ENCODE measurements at regions of chr17 and their contacts with region 1.

Region 1: DNA sequence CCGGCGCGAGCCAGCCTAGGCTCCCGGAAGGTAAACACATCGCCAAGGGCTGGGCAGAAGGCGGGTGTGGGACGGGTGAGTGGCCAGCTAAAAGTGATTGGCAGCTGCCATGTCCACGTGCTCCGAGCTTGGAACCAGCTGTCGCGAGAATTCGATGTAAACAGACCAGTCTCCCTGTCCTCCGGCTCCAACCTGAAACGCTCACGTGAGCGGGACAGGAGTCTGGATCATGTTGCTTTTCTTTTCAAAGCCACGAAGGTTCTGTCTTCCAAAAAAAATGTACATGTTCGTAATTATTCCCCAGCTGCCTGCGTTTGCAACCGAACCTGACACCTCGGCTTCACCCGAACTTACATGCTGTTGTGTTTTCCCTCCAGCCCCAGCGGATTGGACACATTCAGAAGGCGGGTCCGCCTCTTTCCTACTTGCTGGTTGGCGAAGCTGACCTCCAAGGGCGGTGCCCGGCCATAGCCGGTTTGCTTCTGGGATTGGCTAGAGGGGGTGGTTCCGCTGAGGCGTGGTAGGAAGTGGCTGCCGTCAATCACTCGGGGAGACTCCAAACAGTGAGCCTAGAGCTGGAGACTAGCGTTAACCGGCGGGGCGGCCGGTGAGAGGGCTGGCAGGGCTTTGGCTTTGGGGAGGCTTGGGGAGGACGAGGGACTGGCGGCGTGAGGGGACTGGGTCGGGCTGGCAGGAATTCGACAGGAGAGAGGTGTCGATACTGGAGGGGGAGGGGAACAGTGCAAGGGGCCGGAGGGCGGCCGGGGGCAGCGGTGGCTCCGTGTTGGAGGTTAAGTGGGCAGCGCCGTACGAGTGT is at the start of gene BCAS3:
- DNase-seq: peak; percentile 82 to 98 (median 97)
- ATAC-seq: peak; percentile 97
- H3K4me3 ChIP-seq: peak within 1 kb of the TSS; percentile 85
- H3K4me3 Mint-ChIP-seq: peak within 1 kb of the TSS; percentile 95 to 99 (median 98)
- H3K27ac ChIP-seq: peak within 1 kb of the TSS; percentile 84
- H3K27ac Mint-ChIP-seq: peak within 1 kb of the TSS; percentile 91 to 99 (median 96)
- H3K4me1 ChIP-seq: peaks cover 0 to 5% of the 10 kb centered on the region in 2 donors
- H3K4me1 Mint-ChIP-seq: peaks cover 10 to 30% (median 25%) of the 10 kb centered on the region in 7 donors
- H3K27me3 ChIP-seq: no peaks in the 10 kb centered on the region
- H3K27me3 Mint-ChIP-seq: no peaks in the 10 kb centered on the region
- total RNA-seq, gene BCAS3: 18.4 to 57.8 (median 42.3) TPM

Region 2: GRCh38 chr17:60392042-60392844 is 285.3 kb before region 1 on chr17 and contains the start of gene USP32:
- CTCF ChIA-PET with region 1: no interaction called
- POLR2A ChIA-PET with region 1: interaction called, 6 read pairs
- intact Hi-C with region 1: loop called (anchors 1 kb)
- DNase-seq: peak; percentile 94 to 98 (median 96)
- ATAC-seq: peak; percentile 95
- H3K4me3 ChIP-seq: peak within 1 kb of the TSS; percentile 97
- H3K4me3 Mint-ChIP-seq: peak within 1 kb of the TSS; percentile 93 to 99 (median 96)
- H3K27ac ChIP-seq: peak within 1 kb of the TSS; percentile 92
- H3K27ac Mint-ChIP-seq: peak within 1 kb of the TSS; percentile 92 to 99 (median 97)
- H3K4me1 ChIP-seq: peaks cover 5 to 18% of the 10 kb centered on the region in 2 donors
- H3K4me1 Mint-ChIP-seq: peaks cover 30 to 55% (median 41%) of the 10 kb centered on the region in 7 donors
- H3K27me3 ChIP-seq: no peaks in the 10 kb centered on the region
- H3K27me3 Mint-ChIP-seq: no peaks in the 10 kb centered on the region
- total RNA-seq, gene USP32: 31.6 to 58.1 (median 35.4) TPM

Region 3: DNA sequence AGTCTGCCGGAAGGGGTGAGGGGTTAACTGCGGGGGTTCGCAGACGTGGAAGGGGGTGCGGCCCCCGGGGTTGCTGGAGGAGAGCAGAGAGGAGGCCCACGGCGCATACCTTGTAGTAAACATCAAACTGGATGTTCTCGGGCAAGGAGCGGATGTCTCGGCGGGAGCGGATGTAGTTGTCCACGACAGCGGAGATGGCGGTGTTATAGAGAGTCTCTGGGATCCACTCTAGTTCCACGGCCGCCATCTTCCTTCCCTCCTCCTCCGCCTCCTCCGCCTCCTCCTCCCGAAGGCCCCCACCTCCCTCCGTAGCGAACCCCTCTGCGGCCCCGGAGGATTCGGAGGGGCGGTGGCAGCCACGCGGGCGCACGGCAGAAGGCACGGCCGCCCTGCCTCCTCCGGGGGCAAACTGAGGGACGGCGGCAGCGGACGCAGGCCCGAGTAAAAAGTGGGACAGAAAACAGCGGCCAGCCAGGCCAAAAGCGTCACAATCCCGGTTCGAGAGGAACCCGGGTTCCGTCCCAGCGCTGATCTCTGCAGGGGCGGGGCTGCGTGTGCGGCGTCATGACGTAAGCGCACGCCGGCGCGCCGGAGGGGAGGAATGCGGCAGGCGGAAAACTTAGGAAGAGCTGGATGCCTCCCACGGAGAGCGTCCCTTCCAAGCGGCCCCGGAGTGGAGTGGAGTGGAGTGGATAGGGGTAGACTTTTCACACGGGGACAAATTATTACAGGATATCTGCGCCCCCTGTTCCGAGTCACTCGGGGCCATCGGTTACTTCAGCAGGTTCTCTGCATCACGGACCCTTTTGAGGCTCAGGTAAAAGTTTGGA is 151.6 kb before region 1 on chr17 and contains the start of gene APPBP2:
- CTCF ChIA-PET with region 1: no interaction called
- POLR2A ChIA-PET with region 1: no interaction called
- intact Hi-C with region 1: loop called (anchors 1 kb)
- DNase-seq: peak; percentile 59 to 80 (median 77)
- ATAC-seq: peak; percentile 92
- H3K4me3 ChIP-seq: peak within 1 kb of the TSS; percentile 86
- H3K4me3 Mint-ChIP-seq: peak within 1 kb of the TSS; percentile 98 to 100 (median 99)
- H3K27ac ChIP-seq: peak within 1 kb of the TSS; percentile 99
- H3K27ac Mint-ChIP-seq: peak within 1 kb of the TSS; percentile 96 to 99 (median 98)
- H3K4me1 ChIP-seq: peaks cover 19 to 25% of the 10 kb centered on the region in 2 donors
- H3K4me1 Mint-ChIP-seq: peaks cover 31 to 63% (median 55%) of the 10 kb centered on the region in 7 donors
- H3K27me3 ChIP-seq: no peaks in the 10 kb centered on the region
- H3K27me3 Mint-ChIP-seq: no peaks in the 10 kb centered on the region
- total RNA-seq, gene APPBP2: 24.2 to 47.5 (median 33.0) TPM

Region 4: GRCh38 chr17:60695960-60696359 is 18.4 kb after region 1 on chr17:
- CTCF ChIA-PET with region 1: no interaction called
- POLR2A ChIA-PET with region 1: no interaction called
- intact Hi-C with region 1: no loop called
- DNase-seq: no peak
- ATAC-seq: no peak
- H3K4me3 ChIP-seq: no peak overlapping the region
- H3K4me3 Mint-ChIP-seq: no peak overlapping the region
- H3K27ac ChIP-seq: no peak overlapping the region
- H3K27ac Mint-ChIP-seq: no peak overlapping the region
- H3K4me1 ChIP-seq: no peaks in the 10 kb centered on the region
- H3K4me1 Mint-ChIP-seq: peaks cover 0 to 5% (median 0%) of the 10 kb centered on the region in 7 donors
- H3K27me3 ChIP-seq: no peaks in the 10 kb centered on the region
- H3K27me3 Mint-ChIP-seq: no peaks in the 10 kb centered on the region

Region 5: DNA sequence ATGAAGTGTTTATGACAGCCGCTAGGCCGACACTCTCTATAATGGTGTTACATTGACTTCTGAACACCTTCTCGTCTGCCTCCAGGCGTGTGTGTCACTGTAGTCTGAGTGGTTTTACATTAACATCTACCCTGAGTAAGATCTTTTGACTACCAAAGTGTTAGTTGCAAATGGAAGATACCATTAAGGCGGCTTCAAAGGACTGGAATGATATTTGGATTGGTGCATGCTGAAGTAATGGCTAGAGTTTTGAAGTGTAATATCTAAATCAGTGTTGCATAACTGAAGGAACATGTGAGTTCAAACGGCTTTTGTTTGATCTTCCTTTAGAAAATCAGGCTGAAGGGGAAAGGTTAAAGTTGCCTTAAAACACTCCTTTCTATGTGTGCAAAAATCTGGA is 52.3 kb after region 1 on chr17:
- CTCF ChIA-PET with region 1: no interaction called
- POLR2A ChIA-PET with region 1: no interaction called
- intact Hi-C with region 1: no loop called
- DNase-seq: no peak
- ATAC-seq: no peak
- H3K4me3 ChIP-seq: no peak overlapping the region
- H3K4me3 Mint-ChIP-seq: peak overlapping the region in 1 of 10 donors; percentile 48
- H3K27ac ChIP-seq: no peak overlapping the region
- H3K27ac Mint-ChIP-seq: no peak overlapping the region
- H3K4me1 ChIP-seq: no peaks in the 10 kb centered on the region
- H3K4me1 Mint-ChIP-seq: peaks cover 6 to 19% (median 8%) of the 10 kb centered on the region in 7 donors
- H3K27me3 ChIP-seq: no peaks in the 10 kb centered on the region
- H3K27me3 Mint-ChIP-seq: no peaks in the 10 kb centered on the region

Region 6: DNA sequence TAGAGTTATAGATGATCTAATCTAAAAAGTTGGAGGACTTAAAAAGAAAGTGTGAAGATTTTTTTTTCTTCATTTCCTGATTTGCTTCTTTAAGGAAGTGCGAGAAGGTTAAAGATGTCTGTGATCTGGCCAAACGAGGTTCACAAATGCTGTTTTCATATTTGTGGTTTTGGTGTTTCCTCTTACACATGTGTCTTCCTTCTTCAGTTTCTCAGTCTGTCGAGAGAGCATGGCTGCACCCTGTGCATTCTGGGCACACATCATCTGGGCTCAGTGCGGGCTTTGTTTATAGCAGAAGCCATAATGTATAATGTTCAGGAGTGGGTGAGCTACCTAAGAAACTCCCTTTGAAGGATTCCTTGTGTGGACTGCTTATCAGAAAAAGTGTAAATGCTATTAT is 461.7 kb after region 1 on chr17:
- CTCF ChIA-PET with region 1: no interaction called
- POLR2A ChIA-PET with region 1: no interaction called
- intact Hi-C with region 1: loop called in 1 of 2 experiments (anchors 2 kb)
- DNase-seq: peak; percentile 27 to 89 (median 80)
- ATAC-seq: peak; percentile 98
- H3K4me3 ChIP-seq: no peak overlapping the region
- H3K4me3 Mint-ChIP-seq: peak overlapping the region; percentile 24 to 81 (median 66)
- H3K27ac ChIP-seq: peak overlapping the region; percentile 7
- H3K27ac Mint-ChIP-seq: peak overlapping the region; percentile 28 to 86 (median 61)
- H3K4me1 ChIP-seq: peaks cover 14 to 29% of the 10 kb centered on the region in 2 donors
- H3K4me1 Mint-ChIP-seq: peaks cover 12 to 55% (median 44%) of the 10 kb centered on the region in 7 donors
- H3K27me3 ChIP-seq: no peaks in the 10 kb centered on the region
- H3K27me3 Mint-ChIP-seq: no peaks in the 10 kb centered on the region

Region 7: GRCh38 chr17:61862975-61863800 is 1185.7 kb after region 1 on chr17 and contains the start of gene BRIP1:
- CTCF ChIA-PET with region 1: no interaction called
- POLR2A ChIA-PET with region 1: no interaction called
- intact Hi-C with region 1: loop called (anchors 1 to 5 kb)
- DNase-seq: peak; percentile 61 to 90 (median 85)
- ATAC-seq: peak; percentile 99
- H3K4me3 ChIP-seq: peak within 1 kb of the TSS; percentile 88
- H3K4me3 Mint-ChIP-seq: peak within 1 kb of the TSS; percentile 88 to 98 (median 96)
- H3K27ac ChIP-seq: peak within 1 kb of the TSS; percentile 70
- H3K27ac Mint-ChIP-seq: peak within 1 kb of the TSS; percentile 86 to 97 (median 93)
- H3K4me1 ChIP-seq: peaks cover 5 to 11% of the 10 kb centered on the region in 2 donors
- H3K4me1 Mint-ChIP-seq: peaks cover 8 to 36% (median 26%) of the 10 kb centered on the region in 7 donors
- H3K27me3 ChIP-seq: no peaks in the 10 kb centered on the region
- H3K27me3 Mint-ChIP-seq: no peaks in the 10 kb centered on the region
- total RNA-seq, gene BRIP1: 1.6 to 19.9 (median 1.8) TPM

Region 8: GRCh38 chr17:62478433-62478879 is 1800.9 kb after region 1 on chr17 and contains the start of gene TLK2:
- CTCF ChIA-PET with region 1: no interaction called
- POLR2A ChIA-PET with region 1: no interaction called
- intact Hi-C with region 1: loop called in 1 of 2 experiments (anchors 5 kb)
- DNase-seq: peak in 7 of 9 donors; percentile 61 to 84 (median 74)
- ATAC-seq: peak; percentile 88
- H3K4me3 ChIP-seq: peak within 1 kb of the TSS; percentile 53
- H3K4me3 Mint-ChIP-seq: peak within 1 kb of the TSS; percentile 87 to 95 (median 92)
- H3K27ac ChIP-seq: peak within 1 kb of the TSS; percentile 90
- H3K27ac Mint-ChIP-seq: peak within 1 kb of the TSS; percentile 90 to 98 (median 94)
- H3K4me1 ChIP-seq: peaks cover 5 to 8% of the 10 kb centered on the region in 2 donors
- H3K4me1 Mint-ChIP-seq: peaks cover 22 to 48% (median 40%) of the 10 kb centered on the region in 7 donors
- H3K27me3 ChIP-seq: no peaks in the 10 kb centered on the region
- H3K27me3 Mint-ChIP-seq: no peaks in the 10 kb centered on the region
- total RNA-seq, gene TLK2: 48.1 to 84.8 (median 68.6) TPM